Activated naive CD4-positive, alpha-beta T cell treated with anti-CD3 and anti-CD28 coated beads, Interleukin-2, amount 10 ng/mL, durations not matched to agents 7 days and 5 days (primary cell): ENCODE measurements at regions of chr4 and their contacts with region 1.

Region 1: GRCh38 chr4:1752284-1753041 is 31.1 kb downstream of the TACC3 start:
- DNase-seq: peak; percentile 68
- H3K4me3 Mint-ChIP-seq: no peak overlapping the region
- H3K27ac Mint-ChIP-seq: peak overlapping the region; percentile 19
- H3K4me1 Mint-ChIP-seq: peaks cover 12% of the 10 kb centered on the region
- H3K27me3 Mint-ChIP-seq: no peaks in the 10 kb centered on the region

Region 2: DNA sequence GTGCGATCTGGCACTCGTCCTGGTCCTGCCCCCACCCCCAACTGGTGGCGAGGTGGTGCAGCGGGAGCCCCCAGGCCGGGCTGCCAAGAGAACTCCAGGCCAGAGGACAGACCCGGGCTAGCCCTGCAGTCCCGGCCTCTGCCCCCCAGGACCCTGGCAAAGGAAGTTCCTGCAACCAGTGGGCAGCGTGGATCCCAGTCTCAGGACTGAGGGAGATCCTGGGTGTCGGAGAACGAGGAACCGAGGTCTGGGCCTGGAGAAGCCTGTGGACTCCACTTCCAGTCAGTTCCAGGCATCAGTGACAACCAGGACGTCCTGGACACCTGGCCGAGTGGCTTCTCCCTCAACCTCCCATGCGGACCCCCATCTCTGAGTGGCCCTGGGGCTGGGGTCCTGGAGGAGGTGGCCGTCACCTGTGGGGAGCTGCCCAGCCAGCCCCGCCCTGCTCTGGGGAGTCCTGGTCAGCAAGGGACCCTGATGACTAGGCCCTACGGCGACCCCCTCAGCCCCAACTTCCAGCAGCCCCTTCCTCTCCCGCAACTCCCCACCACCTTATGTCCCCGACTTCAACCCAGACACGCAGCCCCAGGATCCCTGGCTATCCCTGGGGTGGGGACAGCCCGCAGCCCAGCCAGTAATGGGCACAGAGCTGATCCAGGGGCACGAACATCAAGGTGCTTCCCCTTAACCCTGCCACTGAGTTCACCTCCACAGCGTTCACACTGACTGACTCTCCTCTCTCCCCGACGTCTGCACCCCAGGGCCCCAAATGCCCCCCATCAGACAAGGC is 292.5 kb before region 1 on chr4:
- CTCF ChIA-PET with region 1: no interaction called
- DNase-seq: no peak
- H3K4me3 Mint-ChIP-seq: no peak overlapping the region
- H3K27ac Mint-ChIP-seq: no peak overlapping the region
- H3K4me1 Mint-ChIP-seq: no peaks in the 10 kb centered on the region
- H3K27me3 Mint-ChIP-seq: peaks cover 33% of the 10 kb centered on the region

Region 3: DNA sequence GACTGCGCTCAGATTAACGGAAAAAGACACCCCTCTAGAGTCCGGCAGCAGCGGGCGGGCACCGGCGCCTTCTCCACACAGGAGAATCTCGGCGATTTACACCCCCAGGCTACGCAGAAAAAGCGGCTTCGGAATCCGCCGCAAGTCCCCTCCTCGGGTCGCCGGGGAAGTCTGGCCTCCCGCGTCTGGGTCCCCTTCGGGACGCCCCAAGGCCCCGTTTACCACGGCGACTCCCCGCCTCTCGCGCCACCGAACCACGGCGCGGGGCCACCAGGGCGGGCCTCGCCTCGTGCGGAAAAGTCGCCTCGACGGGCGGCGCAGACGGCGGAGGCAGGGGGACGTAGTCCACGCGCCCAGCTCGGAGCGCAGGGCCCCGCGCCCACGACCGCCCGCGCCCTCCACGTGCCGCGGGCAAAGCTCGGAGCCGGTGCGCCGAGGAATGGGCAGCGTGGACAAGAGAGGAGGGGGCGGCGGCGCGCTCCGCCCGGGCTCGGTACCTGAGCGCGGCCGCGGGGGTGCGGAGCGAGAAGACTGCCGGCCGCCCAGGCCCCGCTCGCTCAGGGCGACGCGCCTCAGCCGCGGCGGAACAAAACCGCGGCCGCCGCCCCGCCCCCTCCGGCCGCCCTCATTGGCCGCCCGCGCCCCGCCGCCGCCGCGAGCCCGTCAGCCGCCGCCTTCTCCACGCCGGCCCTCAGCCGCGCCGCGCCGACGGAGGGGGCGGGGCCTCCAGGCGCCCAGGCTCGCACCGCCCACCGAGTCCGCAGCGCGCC is 68.5 kb before region 1 on chr4 and contains the start of gene FAM53A:
- CTCF ChIA-PET with region 1: no interaction called
- DNase-seq: no peak
- H3K4me3 Mint-ChIP-seq: peak within 1 kb of the TSS; percentile 77
- H3K27ac Mint-ChIP-seq: peak within 1 kb of the TSS; percentile 86
- H3K4me1 Mint-ChIP-seq: peaks cover 13% of the 10 kb centered on the region
- H3K27me3 Mint-ChIP-seq: peaks cover 11% of the 10 kb centered on the region

Region 4: GRCh38 chr4:1809754-1810511 is 57.5 kb after region 1 on chr4:
- CTCF ChIA-PET with region 1: interaction called, 63 read pairs
- DNase-seq: peak; percentile 82
- H3K4me3 Mint-ChIP-seq: no peak overlapping the region
- H3K27ac Mint-ChIP-seq: no peak overlapping the region
- H3K4me1 Mint-ChIP-seq: no peaks in the 10 kb centered on the region
- H3K27me3 Mint-ChIP-seq: no peaks in the 10 kb centered on the region